ENCODE measurements at regions of chr9 and their contacts with region 1.

Region 1: DNA sequence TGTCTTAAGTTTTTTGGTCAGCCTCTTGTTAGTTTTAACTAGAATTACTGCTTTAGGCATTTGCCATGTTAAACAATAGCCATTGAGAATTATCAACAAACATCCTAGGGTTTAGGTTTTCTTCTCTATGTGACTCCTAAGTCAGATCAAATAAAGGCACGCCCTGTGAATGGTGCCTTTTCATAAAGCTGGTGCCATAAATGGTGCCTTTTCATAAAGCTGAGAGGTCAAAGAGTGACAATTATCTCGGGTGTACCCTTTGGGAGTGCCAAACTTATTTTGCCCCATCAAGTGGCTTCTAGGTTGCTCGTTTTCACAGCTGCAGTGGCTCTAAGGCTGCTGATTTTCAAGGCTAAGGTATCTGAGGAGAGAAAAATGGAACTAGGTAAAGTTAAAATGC is 391.6 kb downstream of the DMRTA1 start:
- DNase-seq: peak; percentile 10
- H3K4me3 ChIP-seq: no peak overlapping the region
- H3K27ac ChIP-seq: peak overlapping the region in 1 of 4 donors; percentile 31
- H3K4me1 ChIP-seq: peaks cover 0 to 8% (median 0%) of the 10 kb centered on the region in 4 donors
- H3K27me3 ChIP-seq: no peaks in the 10 kb centered on the region
- CTCF ChIP-seq: no peak
- EP300 ChIP-seq: no peak
- POLR2A ChIP-seq: no peak

Region 2: GRCh38 chr9:21840647-21841046 is 997.6 kb before region 1 on chr9:
- in situ Hi-C with region 1: no loop called
- intact Hi-C with region 1: no loop called
- DNase-seq: no peak
- H3K4me3 ChIP-seq: no peak overlapping the region
- H3K27ac ChIP-seq: no peak overlapping the region
- H3K4me1 ChIP-seq: no peaks in the 10 kb centered on the region
- H3K27me3 ChIP-seq: no peaks in the 10 kb centered on the region
- CTCF ChIP-seq: no peak
- EP300 ChIP-seq: no peak
- POLR2A ChIP-seq: no peak

Region 3: DNA sequence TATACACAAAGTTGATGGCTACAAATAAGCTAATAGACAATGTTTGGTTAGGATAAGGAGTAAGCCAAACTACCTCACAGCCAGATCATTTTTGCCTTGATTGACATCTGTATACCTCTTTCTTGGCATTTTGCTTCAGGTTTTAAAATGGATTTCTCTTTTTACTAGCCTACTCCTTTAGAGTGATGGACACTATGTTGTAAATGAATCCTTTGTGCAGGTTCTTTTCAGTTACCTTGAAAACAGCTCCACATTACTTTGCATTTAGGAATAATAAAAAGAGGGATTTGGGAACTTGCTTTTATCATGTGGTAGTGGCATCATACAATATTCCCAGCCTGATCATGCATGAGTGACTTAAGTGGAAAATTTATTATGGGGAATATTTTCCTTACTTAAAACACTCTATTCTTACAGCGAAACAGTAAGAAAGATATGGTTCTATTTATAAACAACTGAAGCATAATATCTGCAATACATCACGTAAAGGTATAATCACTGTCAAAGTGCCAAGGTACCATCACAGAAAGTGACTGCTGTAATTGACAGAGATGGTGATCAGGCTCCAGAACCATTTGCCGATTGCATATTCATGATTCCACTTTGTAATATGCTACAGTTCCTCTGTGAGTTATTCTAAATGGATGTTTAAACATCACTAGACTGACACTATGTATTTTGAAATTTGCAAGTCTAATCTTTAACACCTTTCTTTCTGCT is 64.6 kb before region 1 on chr9:
- in situ Hi-C with region 1: loop called in 1 of 4 experiments (anchors 10 kb)
- intact Hi-C with region 1: no loop called
- DNase-seq: no peak
- H3K4me3 ChIP-seq: no peak overlapping the region
- H3K27ac ChIP-seq: no peak overlapping the region
- H3K4me1 ChIP-seq: no peaks in the 10 kb centered on the region
- H3K27me3 ChIP-seq: no peaks in the 10 kb centered on the region
- CTCF ChIP-seq: no peak
- EP300 ChIP-seq: no peak
- POLR2A ChIP-seq: no peak

Measured in transverse colon (tissue), 4 donors.